OCI-LY7 (cell line): ENCODE measurements at regions of chr2 and their contacts with region 1.

Region 1: DNA sequence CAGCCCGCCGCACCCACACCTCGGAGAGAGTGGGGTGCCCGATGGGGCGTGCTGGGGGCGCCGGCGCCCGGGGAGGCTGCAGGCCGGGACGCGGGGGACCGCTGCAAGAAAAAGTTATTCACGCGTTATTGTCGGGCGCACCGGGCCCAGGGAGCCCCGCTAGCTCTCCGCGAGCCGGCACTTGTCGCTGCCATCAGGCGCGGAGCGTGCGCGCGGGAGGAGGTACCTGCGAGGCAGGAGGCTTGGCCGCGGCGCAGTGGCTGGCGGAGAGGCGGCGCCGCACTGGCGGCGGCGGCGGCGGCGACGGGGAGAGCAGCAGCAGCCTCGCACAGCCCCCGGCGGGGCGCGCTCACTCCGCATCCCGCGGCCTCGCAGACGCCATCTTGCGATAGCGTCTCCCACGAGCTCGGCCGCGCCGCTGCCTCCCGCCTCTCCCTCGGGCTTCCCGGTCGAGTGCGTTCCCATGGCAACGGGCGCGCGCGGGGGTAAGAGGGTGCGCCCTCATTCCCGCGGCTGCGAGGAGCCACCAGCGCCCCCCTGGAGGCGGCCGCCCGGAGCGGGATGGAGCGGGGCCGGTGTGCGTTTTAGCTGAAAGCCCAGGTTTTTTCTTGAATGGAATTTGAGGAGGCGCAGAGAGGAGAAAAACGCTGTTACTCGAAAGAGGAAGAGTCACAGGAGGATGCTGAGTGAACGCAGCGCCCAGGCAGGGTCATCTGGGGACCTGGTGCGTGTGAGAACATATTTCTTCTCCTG is at the start of gene CHN1:
- DNase-seq: peak; percentile 23
- H3K4me3 ChIP-seq: peak within 1 kb of the TSS; percentile 57
- H3K27ac ChIP-seq: no peak within 1 kb of the TSS
- H3K4me1 ChIP-seq: no peaks in the 10 kb centered on the region
- CTCF ChIP-seq: 0 out of 2 replicates have a peak, but pooled peaks have one; percentile 14
- total RNA-seq, gene CHN1: 0.44 TPM in 1 of 2 replicates, not detected in the other

Region 2: DNA sequence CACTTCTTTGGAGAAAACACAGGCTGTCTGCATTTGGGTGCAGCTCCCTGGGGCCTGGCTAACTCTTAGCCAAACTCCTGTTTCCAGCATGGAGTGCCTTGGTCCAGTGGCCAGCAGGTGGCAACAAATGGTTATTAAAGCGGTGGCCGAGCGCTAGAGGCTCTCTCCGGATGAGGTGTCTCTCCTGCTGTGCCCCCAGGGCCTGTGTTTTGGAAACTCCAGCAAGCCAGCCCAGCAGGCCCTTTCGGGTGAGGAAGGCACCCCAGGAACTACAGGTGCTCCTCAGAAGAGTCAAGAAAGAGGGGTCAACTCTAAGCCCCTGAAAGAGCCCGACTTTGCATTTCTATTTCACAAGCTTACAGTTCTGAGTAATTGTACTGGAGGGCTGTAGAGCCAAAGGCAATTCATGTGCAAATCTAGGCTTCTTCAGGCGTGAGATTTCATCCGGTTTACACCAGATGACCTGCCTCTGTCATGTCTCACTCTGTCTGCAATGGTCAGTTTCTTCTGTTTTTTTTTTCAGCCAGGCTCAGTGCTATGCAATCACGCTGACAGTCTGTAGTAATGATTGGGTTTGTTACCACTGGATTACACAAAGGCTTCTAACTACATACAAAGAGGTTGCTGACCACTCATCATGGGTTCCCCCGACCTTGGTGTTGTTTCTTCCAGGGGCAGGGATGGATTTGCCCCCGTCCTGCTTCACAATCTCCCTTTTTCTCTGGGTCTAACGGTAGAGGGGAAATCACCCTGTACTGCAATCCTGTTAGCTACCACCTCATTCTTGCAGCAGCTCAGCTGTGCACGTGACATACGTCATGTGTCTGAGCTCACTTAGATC is 233.3 kb before region 1 on chr2:
- CTCF ChIA-PET with region 1: no interaction called
- POLR2A ChIA-PET with region 1: no interaction called
- intact Hi-C with region 1: loop called (anchors 10 kb)
- DNase-seq: peak; percentile 21
- H3K4me3 ChIP-seq: no peak overlapping the region
- H3K27ac ChIP-seq: no peak overlapping the region
- H3K4me1 ChIP-seq: no peaks in the 10 kb centered on the region
- CTCF ChIP-seq: peak; percentile 67

Region 3: GRCh38 chr2:175097297-175097696 is 92.1 kb after region 1 on chr2:
- CTCF ChIA-PET with region 1: no interaction called
- POLR2A ChIA-PET with region 1: no interaction called
- intact Hi-C with region 1: no loop called
- DNase-seq: no peak
- H3K4me3 ChIP-seq: no peak overlapping the region
- H3K27ac ChIP-seq: no peak overlapping the region
- H3K4me1 ChIP-seq: no peaks in the 10 kb centered on the region
- CTCF ChIP-seq: no peak